ENCODE measurements at regions of chr7 and their contacts with region 1.

Region 1: DNA sequence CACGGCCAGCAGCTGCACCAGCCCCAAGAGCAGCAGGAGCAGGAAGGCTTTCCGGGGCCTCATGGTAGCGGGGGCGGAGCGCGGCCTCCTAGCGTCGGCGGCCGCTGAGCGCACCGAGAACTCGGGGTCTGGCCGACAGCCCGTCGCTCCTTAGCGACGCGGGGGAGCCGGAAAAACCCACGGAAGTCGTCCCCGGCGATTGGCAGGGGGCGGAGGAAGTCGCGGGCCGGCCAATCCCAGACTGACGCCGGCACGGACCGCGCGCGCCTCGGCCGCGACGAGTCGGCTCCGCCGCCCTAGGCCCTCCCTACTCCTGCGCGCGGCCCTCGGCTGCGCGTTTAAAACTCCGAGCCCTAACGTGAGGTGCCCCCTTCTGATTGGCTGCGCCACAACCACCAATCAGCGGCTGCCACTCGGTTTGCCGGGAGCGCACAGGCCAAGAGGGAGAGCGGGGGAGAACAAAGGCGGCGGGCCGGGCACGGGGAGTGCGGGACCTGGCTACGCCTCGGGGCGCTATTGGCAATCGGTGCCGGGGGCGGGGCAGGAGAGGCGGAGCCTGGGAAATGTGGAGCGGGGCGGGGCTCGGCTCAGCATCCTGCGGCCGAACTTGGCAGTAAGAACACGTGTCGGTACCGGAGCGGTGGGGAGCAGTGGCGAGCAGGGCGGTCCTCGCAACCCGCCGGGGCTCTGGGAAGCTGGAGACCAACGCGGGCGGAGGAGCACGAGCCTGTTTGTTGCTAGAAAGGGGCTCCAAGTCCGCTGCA is at the start of gene PDIA4:
- DNase-seq: peak; percentile 99 to 100 (median 100)
- H3K4me3 ChIP-seq: peak within 1 kb of the TSS; percentile 68 to 99 (median 87)
- H3K27ac ChIP-seq: peak within 1 kb of the TSS in 58 of 59 donors; percentile 52 to 95 (median 87)
- H3K27me3 ChIP-seq: no peaks in the 10 kb centered on the region
- CTCF ChIP-seq: peak in 49 of 56 donors; percentile 2 to 63 (median 35)
- total RNA-seq, gene PDIA4: 17.6 to 81.7 (median 29.7) TPM

Region 2: DNA sequence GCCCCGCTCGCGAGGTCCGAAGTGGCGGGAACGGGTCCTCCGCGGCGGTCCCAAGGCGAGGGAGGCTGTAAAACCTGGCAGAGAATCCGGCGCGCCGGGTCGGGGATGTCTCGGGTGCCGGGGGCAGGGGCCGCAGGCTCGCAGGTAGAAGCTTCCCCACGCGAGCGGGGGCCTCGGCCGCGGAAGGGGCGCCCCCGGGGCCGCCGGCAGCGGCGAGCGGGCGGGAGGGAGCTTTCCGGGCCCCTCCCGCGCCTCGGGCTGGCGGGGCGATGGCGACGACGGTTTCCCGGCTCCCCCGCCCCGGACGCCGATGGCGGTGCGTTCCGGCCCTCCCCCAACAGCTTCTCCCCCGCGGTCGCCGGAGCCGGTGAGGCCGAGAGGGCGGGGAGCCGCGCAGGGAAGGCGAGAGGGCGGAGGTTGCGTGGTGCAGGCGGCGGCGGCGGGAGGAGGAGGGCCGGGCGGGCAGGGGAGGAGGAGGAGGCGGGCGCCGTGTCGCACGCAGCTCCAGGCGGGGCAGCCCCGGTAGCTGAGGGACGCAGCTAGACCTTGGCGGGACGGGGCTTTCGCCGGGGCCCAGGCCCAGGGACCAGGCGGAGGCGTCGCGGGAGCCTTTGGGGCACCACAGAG is 330.0 kb before region 1 on chr7 and contains the start of gene CUL1:
- intact Hi-C with region 1: loop called in 1 of 2 experiments (anchors 2 kb)
- DNase-seq: peak; percentile 40 to 85 (median 64)
- H3K4me3 ChIP-seq: peak within 1 kb of the TSS; percentile 68 to 98 (median 90)
- H3K27ac ChIP-seq: peak within 1 kb of the TSS; percentile 61 to 99 (median 94)
- H3K27me3 ChIP-seq: no peaks in the 10 kb centered on the region
- CTCF ChIP-seq: peak in 2 of 56 donors; percentile 2 to 28
- total RNA-seq, gene CUL1: 36.5 to 74.2 (median 59.6) TPM

Region 3: GRCh38 chr7:148914208-148914777 is 114.2 kb before region 1 on chr7:
- intact Hi-C with region 1: no loop called
- DNase-seq: peak in 8 of 10 donors; percentile 27 to 72 (median 52)
- H3K4me3 ChIP-seq: no peak overlapping the region
- H3K27ac ChIP-seq: peak overlapping the region in 2 of 59 donors; percentile 27
- H3K27me3 ChIP-seq: peaks cover 0 to 10% (median 0%) of the 10 kb centered on the region in 45 donors
- CTCF ChIP-seq: no peak

Region 4: DNA sequence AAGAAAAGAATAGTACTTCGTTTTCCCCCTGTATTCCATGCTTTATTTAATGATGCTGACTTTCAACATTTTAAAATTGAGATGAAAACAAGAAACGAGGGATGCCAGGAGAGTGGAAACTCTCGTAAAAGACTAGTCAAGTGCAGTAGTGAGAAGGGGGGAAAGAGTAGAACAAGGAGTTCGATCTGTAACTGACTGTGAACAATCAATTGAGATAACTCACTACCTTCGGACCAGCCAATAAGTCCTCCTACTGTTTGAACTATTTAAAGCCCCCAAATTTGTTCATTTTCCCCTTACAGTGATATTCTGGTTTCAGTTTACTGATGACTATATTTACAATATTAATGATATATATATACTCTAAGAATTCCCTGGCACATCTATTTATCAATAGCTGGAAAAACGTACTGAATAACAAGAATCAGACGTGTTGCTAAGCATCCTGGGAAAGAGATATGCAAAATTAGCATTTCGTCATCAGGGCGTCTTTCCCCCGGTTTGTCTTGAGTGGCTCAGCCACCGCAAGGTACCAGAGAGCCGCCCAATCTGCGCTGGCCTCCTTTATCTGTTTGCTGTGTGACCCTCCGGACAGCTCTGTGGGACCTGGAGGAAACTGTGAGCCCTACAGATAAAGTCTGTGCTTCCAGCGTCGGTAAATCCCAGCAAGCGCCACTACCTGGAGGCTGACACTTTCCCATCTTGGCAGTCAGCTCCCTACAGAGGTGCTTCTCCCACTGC is 41.3 kb before region 1 on chr7:
- intact Hi-C with region 1: loop called (anchors 2 to 5 kb)
- DNase-seq: peak; percentile 50 to 92 (median 82)
- H3K4me3 ChIP-seq: peak overlapping the region; percentile 41 to 95 (median 76)
- H3K27ac ChIP-seq: peak overlapping the region; percentile 26 to 95 (median 87)
- H3K27me3 ChIP-seq: no peaks in the 10 kb centered on the region
- CTCF ChIP-seq: peak in 6 of 56 donors; percentile 5 to 17 (median 9)

Region 5: DNA sequence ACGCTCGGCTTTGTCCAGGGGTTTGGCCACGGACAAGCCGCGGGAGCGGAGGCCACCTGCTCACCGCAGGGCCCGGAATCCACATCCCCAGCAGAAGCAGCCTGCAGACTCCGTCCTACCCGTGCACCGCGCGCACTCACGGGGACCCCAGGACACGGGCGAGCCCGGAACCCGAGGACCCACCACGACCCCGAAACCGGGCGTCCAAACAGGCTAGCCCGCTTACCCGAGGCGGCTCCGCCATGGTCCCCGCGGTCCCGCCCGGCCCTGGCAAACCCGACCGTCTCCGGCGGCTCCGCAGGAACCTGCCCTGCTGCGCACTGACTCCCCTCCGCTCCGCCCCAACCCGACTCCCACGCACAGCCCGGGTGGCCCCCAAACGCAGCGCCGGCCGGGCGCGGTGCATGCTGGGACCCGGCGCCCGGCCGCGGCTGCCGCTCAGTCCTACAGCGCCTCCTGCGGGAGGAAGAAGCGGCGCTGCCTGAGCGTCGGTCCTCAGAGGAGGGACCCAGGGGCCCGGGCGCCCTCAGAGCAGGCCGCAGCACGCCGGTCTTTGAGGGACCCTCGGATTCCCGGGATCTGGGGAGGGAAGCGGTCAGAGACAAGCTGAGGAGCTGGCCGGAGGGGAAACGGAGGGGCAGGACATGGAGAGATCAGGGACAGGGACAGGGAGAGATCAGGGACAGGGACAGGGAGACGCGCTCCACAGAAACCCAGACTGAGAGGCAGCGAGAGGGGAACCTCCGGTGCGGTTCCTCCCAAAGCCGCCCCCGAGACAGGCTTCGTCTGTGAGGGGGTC is 62.1 kb after region 1 on chr7 and contains the start of gene ZNF786:
- intact Hi-C with region 1: loop called in 1 of 2 experiments (anchors 1 kb)
- DNase-seq: peak; percentile 58 to 91 (median 78)
- H3K4me3 ChIP-seq: peak within 1 kb of the TSS; percentile 43 to 100 (median 95)
- H3K27ac ChIP-seq: peak within 1 kb of the TSS; percentile 79 to 100 (median 97)
- H3K27me3 ChIP-seq: no peaks in the 10 kb centered on the region
- CTCF ChIP-seq: peak; percentile 71 to 99 (median 92)
- total RNA-seq, gene ZNF786: 7.0 to 22.7 (median 15.0) TPM

Region 6: DNA sequence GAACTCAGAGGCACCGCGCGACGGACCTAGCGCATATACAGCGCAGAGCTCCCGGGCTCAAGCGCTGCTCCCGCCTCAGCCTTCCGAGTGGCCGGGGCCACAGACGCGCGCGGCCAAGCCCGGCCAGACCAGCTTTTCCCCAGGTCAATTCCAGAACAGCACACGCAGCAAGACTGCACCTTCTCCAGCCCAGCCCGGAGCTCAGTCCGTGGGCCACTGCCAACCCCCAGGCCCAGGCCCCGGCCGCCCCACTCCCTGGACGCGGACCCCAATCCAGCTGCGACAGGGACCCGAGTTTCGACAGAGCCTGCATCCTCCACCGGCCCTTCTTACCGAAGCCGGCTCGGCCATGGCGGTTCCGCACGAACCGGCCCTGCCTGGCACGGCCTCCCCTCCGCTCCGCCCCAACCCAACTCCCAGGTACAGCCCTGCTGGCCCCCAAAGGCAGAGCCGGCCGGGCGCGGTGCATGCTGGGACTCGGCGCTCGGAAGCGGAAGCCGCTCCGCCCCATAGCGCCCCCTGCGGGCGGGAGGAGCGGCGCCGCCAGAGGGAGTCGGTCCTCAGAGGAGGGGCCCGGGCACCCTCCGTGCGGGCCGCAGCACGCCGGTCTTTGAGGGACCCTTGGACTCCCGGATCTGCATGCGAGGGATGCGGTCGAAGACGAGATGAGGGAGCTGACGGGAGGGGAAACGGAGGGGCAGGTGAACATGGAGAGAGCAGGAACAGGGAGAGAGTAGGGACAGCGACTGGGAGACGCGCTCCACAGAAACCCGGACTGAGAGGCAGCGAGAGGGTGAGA is 97.5 kb after region 1 on chr7 and contains the start of gene ZNF425:
- intact Hi-C with region 1: loop called in 1 of 2 experiments (anchors 1 kb)
- DNase-seq: peak; percentile 64 to 94 (median 83)
- H3K4me3 ChIP-seq: peak within 1 kb of the TSS; percentile 69 to 100 (median 94)
- H3K27ac ChIP-seq: peak within 1 kb of the TSS; percentile 53 to 99 (median 96)
- H3K27me3 ChIP-seq: no peaks in the 10 kb centered on the region
- CTCF ChIP-seq: peak; percentile 73 to 99 (median 94)
- total RNA-seq, gene ZNF425: 3.9 to 11.4 (median 6.6) TPM

Measured in dorsolateral prefrontal cortex (tissue), 120 donors.